HCT116 (cell line): ENCODE measurements at regions of chr3 and their contacts with region 1.

Region 1: GRCh38 chr3:124878561-124879336 is 8.4 kb downstream of the ITGB5 start:
- DNase-seq: peak; percentile 89
- ATAC-seq: peak; percentile 83
- H3K4me3 ChIP-seq: peak overlapping the region in 1 of 2 experiments; percentile 35; a peak in 2 of 4 replicates
- H3K27ac ChIP-seq: peak overlapping the region; percentile 73
- H3K4me1 ChIP-seq: peaks cover 75 to 81% of the 10 kb centered on the region in 2 experiments
- H3K27me3 ChIP-seq: no peaks in the 10 kb centered on the region
- CTCF ChIP-seq: no peak
- POLR2A ChIP-seq: no peak
- RAD21 ChIP-seq: peak; percentile 14

Region 2: GRCh38 chr3:124812291-124813265 is 66.2 kb before region 1 on chr3:
- CTCF ChIA-PET with region 1: no interaction called
- POLR2A ChIA-PET with region 1: interaction called, 3 read pairs
- RAD21 ChIA-PET with region 1: no interaction called
- intact Hi-C with region 1: loop called (anchors 2 kb)
- DNase-seq: peak; percentile 82
- ATAC-seq: peak; percentile 93
- H3K4me3 ChIP-seq: peak overlapping the region; percentile 9 to 12; a peak in 2 of 4 replicates
- H3K27ac ChIP-seq: peak overlapping the region; percentile 54
- H3K4me1 ChIP-seq: peaks cover 22 to 45% of the 10 kb centered on the region in 2 experiments
- H3K27me3 ChIP-seq: no peaks in the 10 kb centered on the region
- CTCF ChIP-seq: no peak
- POLR2A ChIP-seq: no peak
- RAD21 ChIP-seq: peak; percentile 23; the same call in 1 of the 2 replicates

Region 3: GRCh38 chr3:124834723-124835718 is 43.7 kb before region 1 on chr3:
- CTCF ChIA-PET with region 1: no interaction called
- POLR2A ChIA-PET with region 1: no interaction called
- RAD21 ChIA-PET with region 1: no interaction called
- intact Hi-C with region 1: loop called (anchors 2 kb)
- DNase-seq: peak; percentile 75
- ATAC-seq: peak; percentile 80
- H3K4me3 ChIP-seq: peak overlapping the region; percentile 2 to 21; a peak in 3 of 4 replicates
- H3K27ac ChIP-seq: peak overlapping the region; percentile 76
- H3K4me1 ChIP-seq: peaks cover 56 to 68% of the 10 kb centered on the region in 2 experiments
- H3K27me3 ChIP-seq: no peaks in the 10 kb centered on the region
- CTCF ChIP-seq: no peak
- POLR2A ChIP-seq: no peak
- RAD21 ChIP-seq: peak; percentile 28; the same call in 1 of the 2 replicates

Region 4: DNA sequence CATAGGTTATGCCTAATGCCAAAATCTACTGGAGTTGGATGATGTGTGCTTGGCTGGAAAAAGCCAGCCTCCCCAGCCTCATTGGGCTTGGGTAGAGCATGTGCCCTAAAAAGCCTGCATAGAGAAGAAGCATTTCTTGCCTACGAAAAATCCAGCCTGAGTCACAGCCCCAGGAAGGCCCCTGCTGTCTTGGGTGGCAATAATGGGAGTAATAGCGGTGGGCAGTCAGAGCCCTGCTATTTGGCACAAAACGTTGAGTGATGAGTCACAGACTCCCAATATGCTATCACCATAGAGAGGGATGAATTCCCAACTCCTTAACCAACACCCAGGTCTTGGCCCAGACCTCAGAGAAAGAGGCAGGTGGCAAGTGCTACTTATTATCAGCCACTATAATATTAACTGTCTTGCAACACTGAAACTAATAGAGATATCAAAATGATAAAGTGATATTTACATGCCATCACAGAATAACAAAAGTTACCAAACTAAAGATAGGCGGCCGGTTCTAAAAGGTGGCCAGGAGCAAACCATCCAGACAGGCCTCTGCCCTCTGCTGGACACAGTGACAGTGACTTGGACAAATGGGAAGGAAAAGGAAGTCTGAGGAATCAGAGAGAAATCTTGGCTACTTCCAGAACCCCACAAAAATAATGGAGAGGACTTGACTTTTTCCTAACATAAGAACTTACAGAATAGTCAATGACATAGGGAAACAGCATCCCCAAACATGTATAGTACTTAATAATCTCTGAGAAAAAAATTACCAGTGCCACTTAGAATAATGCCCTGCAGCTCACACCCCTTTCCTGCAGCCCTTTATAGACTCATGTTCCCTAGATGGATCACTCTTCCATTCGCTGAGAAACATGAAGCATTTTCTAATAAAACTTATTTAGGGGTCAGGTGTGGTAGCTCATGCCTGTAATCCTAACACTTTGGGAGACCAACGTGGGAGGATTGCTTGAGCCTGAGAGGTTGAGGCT is 107.7 kb after region 1 on chr3:
- CTCF ChIA-PET with region 1: no interaction called
- POLR2A ChIA-PET with region 1: no interaction called
- RAD21 ChIA-PET with region 1: no interaction called
- intact Hi-C with region 1: no loop called
- DNase-seq: peak; percentile 91
- ATAC-seq: peak; percentile 92
- H3K4me3 ChIP-seq: peak overlapping the region in 1 of 2 experiments; percentile 12; a peak in 1 of 4 replicates
- H3K27ac ChIP-seq: peak overlapping the region; percentile 63
- H3K4me1 ChIP-seq: peaks cover 21 to 29% of the 10 kb centered on the region in 2 experiments
- H3K27me3 ChIP-seq: no peaks in the 10 kb centered on the region
- CTCF ChIP-seq: peak; percentile 75 to 84 (median 83); a peak in 5 of 6 replicates
- POLR2A ChIP-seq: no peak
- RAD21 ChIP-seq: peak; percentile 65